SK-N-SH (cell line): ENCODE measurements at regions of chr7 and their contacts with region 1.

Region 1: DNA sequence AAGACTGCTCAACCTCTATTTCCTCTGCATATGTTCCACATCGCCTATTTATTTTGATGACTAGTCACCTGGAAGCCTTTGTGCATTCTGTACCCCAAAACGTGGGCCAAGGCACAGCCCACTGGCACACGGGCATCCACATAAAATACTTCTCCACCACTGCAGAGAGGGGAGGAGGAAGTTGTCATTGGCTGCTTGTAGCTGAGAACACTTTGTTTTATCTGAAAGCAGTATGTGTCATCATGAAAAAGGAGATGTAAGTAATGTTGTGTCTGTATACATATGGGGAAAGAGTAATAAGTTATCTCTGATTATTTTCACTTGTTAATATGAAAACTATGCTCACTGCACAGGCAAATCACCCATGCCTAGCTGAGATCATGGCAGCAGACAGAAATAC is 48.2 kb upstream of the AMPH start:
- DNase-seq: no peak
- H3K4me3 ChIP-seq: no peak overlapping the region
- H3K27ac ChIP-seq: no peak overlapping the region
- H3K4me1 ChIP-seq: no peaks in the 10 kb centered on the region
- H3K27me3 ChIP-seq: no peaks in the 10 kb centered on the region; the same call in 1 of the 2 replicates
- CTCF ChIP-seq: no peak
- EP300 ChIP-seq: no peak
- RAD21 ChIP-seq: no peak

Region 2: GRCh38 chr7:38660427-38661099 is 18.9 kb before region 1 on chr7:
- CTCF ChIA-PET with region 1: interaction called, 10 read pairs
- POLR2A ChIA-PET with region 1: no interaction called
- DNase-seq: peak; percentile 61
- H3K4me3 ChIP-seq: peak overlapping the region in 1 of 2 experiments; percentile 10; a peak in 1 of 4 replicates
- H3K27ac ChIP-seq: no peak overlapping the region
- H3K4me1 ChIP-seq: no peaks in the 10 kb centered on the region
- H3K27me3 ChIP-seq: no peaks in the 10 kb centered on the region
- CTCF ChIP-seq: peak; percentile 93
- EP300 ChIP-seq: no peak
- RAD21 ChIP-seq: peak; percentile 77

Region 3: GRCh38 chr7:38748056-38748611 is 68.7 kb after region 1 on chr7:
- CTCF ChIA-PET with region 1: no interaction called
- POLR2A ChIA-PET with region 1: no interaction called
- DNase-seq: peak; percentile 16
- H3K4me3 ChIP-seq: no peak overlapping the region
- H3K27ac ChIP-seq: no peak overlapping the region
- H3K4me1 ChIP-seq: 0 out of 4 replicates have a peak, but pooled peaks cover 0 to 3% of the 10 kb centered on the region in 2 experiments
- H3K27me3 ChIP-seq: no peaks in the 10 kb centered on the region
- CTCF ChIP-seq: peak; percentile 66
- EP300 ChIP-seq: no peak
- RAD21 ChIP-seq: no peak

Region 4: GRCh38 chr7:39259391-39260003 is 580.1 kb after region 1 on chr7:
- CTCF ChIA-PET with region 1: no interaction called
- POLR2A ChIA-PET with region 1: no interaction called
- DNase-seq: no peak
- H3K4me3 ChIP-seq: no peak overlapping the region
- H3K27ac ChIP-seq: no peak overlapping the region
- H3K4me1 ChIP-seq: no peaks in the 10 kb centered on the region
- H3K27me3 ChIP-seq: peaks cover 15% of the 10 kb centered on the region; the same call in 1 of the 2 replicates
- CTCF ChIP-seq: no peak
- EP300 ChIP-seq: no peak
- RAD21 ChIP-seq: no peak